Breast epithelium (tissue), 4 donors: ENCODE measurements at regions of chr2 and their contacts with region 1.

Region 1: GRCh38 chr2:154015235-154015634 is 143.5 kb downstream of the GALNT13 start:
- DNase-seq: no peak
- H3K4me3 ChIP-seq: no peak overlapping the region
- H3K27ac ChIP-seq: no peak overlapping the region
- H3K4me1 ChIP-seq: no peaks in the 10 kb centered on the region
- H3K27me3 ChIP-seq: no peaks in the 10 kb centered on the region
- CTCF ChIP-seq: no peak
- POLR2A ChIP-seq: no peak

Region 2: GRCh38 chr2:153986488-153987229 is 28.6 kb before region 1 on chr2:
- intact Hi-C with region 1: no loop called
- DNase-seq: no peak
- H3K4me3 ChIP-seq: no peak overlapping the region
- H3K27ac ChIP-seq: no peak overlapping the region
- H3K4me1 ChIP-seq: no peaks in the 10 kb centered on the region
- H3K27me3 ChIP-seq: no peaks in the 10 kb centered on the region
- CTCF ChIP-seq: no peak
- POLR2A ChIP-seq: no peak

Region 3: DNA sequence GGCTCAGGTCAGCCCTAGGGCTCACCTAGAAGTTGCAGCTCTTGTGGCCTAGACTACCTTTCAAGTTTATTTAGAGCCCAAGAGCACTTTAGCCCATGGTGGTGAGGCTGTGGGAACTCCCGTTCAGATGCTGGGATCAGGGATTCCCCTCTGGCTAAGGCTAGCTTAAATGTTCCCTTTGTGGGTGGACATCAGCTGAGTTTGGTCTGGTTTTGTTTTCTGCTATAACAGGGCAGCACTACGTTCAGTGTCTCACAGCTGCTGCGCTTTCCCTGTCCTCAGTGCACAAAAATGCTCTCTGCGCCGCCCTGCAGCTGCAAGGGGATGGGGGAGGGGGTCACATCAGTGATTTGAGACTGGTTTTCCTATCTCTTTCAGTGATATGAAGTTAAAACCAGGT is 512.7 kb after region 1 on chr2:
- intact Hi-C with region 1: no loop called
- DNase-seq: no peak
- H3K4me3 ChIP-seq: no peak overlapping the region
- H3K27ac ChIP-seq: no peak overlapping the region
- H3K4me1 ChIP-seq: no peaks in the 10 kb centered on the region
- H3K27me3 ChIP-seq: no peaks in the 10 kb centered on the region
- CTCF ChIP-seq: no peak
- POLR2A ChIP-seq: no peak

Region 4: GRCh38 chr2:154570501-154570900 is 555.3 kb after region 1 on chr2:
- intact Hi-C with region 1: loop called (anchors 5 kb)
- DNase-seq: no peak
- H3K4me3 ChIP-seq: no peak overlapping the region
- H3K27ac ChIP-seq: no peak overlapping the region
- H3K4me1 ChIP-seq: no peaks in the 10 kb centered on the region
- H3K27me3 ChIP-seq: no peaks in the 10 kb centered on the region
- CTCF ChIP-seq: no peak
- POLR2A ChIP-seq: no peak